ENCODE measurements at regions of chr11 and their contacts with region 1.

Region 1: DNA sequence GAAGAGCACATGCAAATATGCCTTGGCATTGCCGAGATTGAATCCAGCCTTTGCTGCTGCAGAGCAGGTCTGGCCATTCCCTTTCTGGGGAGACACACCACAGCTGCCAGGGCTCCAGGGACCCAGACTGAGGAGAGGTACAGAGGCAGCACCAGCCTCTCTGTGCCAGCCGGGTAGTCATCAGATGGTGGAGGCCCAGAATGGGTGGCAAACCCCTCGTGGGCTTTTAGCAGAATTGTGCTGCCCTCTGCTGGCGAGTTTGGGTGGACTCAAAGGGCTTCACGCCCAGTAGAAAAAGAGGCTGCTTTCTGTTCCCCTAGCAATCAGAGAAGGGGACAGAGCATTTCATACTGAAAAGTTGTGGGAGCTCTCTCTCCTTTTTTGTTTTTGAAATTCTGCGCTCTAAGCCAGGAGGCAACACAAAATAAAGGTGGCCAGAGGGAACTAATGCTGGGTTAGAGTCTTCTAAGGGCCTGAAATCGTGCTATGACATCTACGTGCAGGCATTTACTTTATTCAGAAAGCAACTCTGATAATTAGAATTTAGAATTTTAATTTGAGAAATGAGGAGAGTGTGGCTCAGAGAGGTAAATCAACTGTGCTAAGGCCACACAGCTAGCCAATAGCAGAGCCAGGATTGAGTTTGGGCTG is 158.8 kb upstream of the NAV2 start:
- DNase-seq: peak; percentile 86
- ATAC-seq: peak; percentile 71
- H3K4me3 ChIP-seq: no peak overlapping the region
- H3K27ac ChIP-seq: no peak overlapping the region
- H3K4me1 ChIP-seq: no peaks in the 10 kb centered on the region
- H3K27me3 ChIP-seq: no peaks in the 10 kb centered on the region
- CTCF ChIP-seq: peak; percentile 89

Region 2: DNA sequence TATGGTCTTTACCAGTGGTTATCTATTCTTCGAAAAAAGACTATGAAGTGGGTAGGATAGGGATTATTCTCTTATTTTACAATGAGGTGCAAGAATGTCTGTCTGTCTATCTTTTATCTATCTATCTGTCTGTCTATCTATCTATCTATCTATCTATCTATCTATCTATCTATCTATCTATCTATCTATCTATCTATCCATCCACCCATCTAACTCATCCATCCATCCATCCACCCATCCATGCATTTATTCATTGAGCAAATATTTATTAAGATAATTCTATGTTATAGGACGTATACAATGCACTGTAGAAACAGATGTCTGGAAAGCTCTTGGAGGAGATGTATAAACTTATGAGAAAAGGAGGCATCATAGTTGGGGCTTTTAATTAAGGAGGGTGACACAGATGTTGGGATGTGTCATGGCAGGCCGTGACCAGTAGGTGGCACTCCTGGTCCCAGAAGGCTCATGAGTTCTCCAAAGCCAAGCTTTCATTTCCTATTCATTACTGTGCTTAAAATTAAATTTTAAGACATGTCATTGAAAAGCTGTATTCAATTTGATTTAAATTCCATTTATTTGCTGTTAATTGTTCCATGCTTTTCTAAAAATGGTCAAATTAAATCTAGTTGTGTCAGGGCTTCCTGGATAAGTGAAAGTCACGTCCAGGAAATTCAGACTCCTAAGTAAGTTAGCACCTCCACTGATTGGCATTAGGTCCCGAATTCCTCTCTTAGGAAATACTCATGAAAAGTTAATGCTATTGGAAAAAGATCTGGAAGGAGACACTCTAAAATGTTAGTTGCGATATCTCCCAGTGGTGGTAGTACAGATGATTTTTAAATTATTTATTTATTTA is 294.1 kb before region 1 on chr11:
- CTCF ChIA-PET with region 1: no interaction called
- POLR2A ChIA-PET with region 1: no interaction called
- intact Hi-C with region 1: loop called (anchors 1 kb)
- DNase-seq: peak; percentile 76
- ATAC-seq: peak; percentile 84
- H3K4me3 ChIP-seq: peak overlapping the region; percentile 58
- H3K27ac ChIP-seq: no peak overlapping the region
- H3K4me1 ChIP-seq: no peaks in the 10 kb centered on the region
- H3K27me3 ChIP-seq: no peaks in the 10 kb centered on the region
- CTCF ChIP-seq: peak; percentile 91

Region 3: DNA sequence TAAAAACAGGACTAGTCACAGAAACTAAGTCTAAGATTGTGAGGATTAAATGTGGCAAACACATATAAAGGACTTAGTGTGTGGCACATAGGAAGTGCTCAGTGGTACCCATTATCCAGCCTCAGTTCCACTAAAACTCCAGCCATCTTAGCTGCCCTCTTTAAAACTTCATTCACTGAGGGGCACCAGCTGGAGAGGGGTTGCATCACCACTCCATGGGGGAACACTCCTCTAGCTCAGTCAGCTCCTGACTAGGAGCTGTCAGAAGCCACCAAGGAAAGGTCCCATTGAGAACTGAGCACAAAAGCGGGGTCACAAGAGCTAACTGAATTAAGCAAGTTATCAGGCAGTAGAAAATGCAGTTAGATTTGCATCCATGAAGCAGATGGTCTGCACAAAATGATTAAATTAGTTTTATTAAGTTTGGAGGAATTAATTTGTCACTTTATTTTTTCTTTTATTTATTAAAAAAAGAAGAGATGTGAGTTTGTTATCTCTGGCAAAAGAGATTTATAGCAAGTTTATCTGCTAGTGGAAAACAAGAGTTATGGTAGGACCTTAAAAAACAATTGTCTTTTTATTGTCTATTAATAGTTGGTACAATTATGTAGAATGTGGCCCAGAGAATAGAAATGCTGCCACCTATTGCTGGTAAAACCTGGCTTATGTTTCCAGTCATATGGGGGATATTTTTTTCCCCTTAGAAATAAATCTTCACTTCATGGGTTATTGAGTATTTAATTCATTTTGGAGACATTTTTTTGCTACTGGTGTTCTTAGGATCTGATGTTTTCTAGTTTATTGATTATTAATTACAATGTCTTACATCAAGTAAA is 254.5 kb after region 1 on chr11:
- CTCF ChIA-PET with region 1: no interaction called
- POLR2A ChIA-PET with region 1: no interaction called
- intact Hi-C with region 1: loop called (anchors 1 kb)
- DNase-seq: peak; percentile 21
- ATAC-seq: no peak
- H3K4me3 ChIP-seq: no peak overlapping the region
- H3K27ac ChIP-seq: no peak overlapping the region
- H3K4me1 ChIP-seq: peaks cover 30% of the 10 kb centered on the region
- H3K27me3 ChIP-seq: no peaks in the 10 kb centered on the region
- CTCF ChIP-seq: peak; percentile 56

Region 4: GRCh38 chr11:20127671-20128527 is 574.1 kb after region 1 on chr11:
- CTCF ChIA-PET with region 1: no interaction called
- POLR2A ChIA-PET with region 1: no interaction called
- intact Hi-C with region 1: loop called (anchors 10 kb)
- DNase-seq: peak; percentile 78
- ATAC-seq: peak; percentile 64
- H3K4me3 ChIP-seq: no peak overlapping the region
- H3K27ac ChIP-seq: no peak overlapping the region
- H3K4me1 ChIP-seq: peaks cover 26% of the 10 kb centered on the region
- H3K27me3 ChIP-seq: no peaks in the 10 kb centered on the region
- CTCF ChIP-seq: peak; percentile 85

Measured in PC-3 (cell line).